Activated CD4-positive, alpha-beta T cell treated with anti-CD3 and anti-CD28 coated beads for 36 hours (primary cell): ENCODE measurements at regions of chr12 and their contacts with region 1.

Region 1: DNA sequence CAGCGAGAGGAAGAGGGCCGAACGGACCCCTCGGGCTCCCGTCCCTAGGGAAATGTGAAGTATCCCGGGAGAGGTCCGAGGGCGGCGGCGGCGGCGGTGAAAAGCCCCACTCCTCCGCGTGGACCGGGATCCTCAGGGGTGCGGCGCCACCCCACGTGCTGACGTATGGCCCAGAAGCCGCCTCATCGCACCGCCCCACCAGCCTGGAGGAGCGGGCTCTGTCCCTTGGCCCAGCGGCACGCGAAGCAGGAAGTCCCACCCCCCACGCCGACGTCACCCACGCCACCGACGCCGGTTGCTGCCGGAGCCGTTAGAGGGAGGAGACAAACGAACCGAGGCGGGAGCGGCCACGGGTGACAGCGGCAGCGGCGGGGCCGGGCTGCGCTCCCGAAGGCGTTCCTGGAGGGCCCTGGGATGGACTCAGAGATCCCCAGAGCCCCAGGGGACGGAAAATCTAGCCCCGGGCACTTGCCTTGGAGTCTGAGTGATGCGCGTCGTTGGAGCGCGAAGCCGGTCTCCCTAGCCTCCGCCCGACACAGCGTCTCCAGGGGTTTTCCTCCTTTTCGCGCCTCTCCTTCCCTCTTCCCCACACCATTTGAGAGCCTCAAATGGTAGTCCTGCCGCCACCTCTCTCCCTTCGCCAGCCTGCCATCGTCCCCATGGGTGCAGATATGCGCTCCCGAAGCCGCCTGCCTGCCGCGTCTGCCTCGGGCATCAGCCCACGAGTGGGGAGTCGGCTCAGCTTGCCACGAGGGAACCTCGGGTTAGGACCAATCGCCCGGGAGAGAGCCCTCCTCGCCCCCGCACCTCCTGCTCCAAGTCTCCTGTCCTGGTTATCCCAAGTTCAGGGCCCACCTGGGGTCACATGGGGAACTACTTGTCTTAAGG is at the start of gene CEP83:
- DNase-seq: peak; percentile 98
- ATAC-seq: peak; percentile 99
- H3K4me3 Mint-ChIP-seq: peak within 1 kb of the TSS; percentile 96
- H3K27ac Mint-ChIP-seq: peak within 1 kb of the TSS; percentile 95
- H3K4me1 Mint-ChIP-seq: peaks cover 30% of the 10 kb centered on the region
- H3K27me3 Mint-ChIP-seq: peaks cover 10% of the 10 kb centered on the region
- total RNA-seq, gene CEP83: 21.9 to 22.6 TPM

Region 2: DNA sequence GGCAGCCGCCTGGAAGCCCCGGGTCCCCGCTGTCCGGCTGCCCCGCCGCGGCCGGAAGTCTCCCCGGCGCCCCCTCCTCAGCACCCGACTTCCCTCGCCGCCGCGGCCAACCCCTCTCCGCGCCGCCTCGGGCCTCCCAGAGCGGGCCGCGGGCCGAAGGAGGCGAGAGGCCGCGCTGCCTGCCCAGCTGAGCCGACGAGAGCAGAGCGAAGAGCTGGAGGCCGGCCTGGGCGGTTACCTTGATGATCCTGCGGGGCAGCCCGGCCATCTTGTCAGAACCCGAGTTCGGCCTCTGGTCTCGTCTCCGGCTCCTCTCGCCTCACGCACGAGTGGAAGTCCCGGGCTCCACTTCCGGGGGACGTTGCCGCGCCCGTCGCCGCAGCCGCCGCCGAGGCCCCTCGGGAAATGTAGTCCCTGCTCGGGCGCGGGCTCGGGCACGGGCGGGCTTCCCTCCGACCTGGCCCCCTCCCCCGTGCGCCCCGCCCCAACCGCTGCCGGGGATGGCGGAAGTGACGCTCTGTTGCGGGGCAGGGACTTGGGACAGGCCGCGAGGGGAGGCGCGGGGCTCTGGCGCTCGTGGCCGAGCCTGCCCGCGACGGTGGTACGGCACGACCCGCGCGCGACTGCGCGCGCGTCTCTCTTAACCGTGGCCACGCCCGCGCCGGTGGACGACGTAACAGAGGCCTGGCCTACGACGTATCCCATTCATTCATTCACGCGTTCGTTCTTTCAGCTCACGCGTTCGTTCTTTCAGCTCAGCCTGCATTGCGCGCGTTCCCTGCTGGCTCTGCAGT is 1018.2 kb before region 1 on chr12 and contains the start of gene UBE2N:
- CTCF ChIA-PET with region 1: no interaction called
- POLR2A ChIA-PET with region 1: no interaction called
- intact Hi-C with region 1: loop called in 1 of 2 experiments (anchors 10 kb)
- DNase-seq: peak; percentile 98
- ATAC-seq: peak; percentile 84
- H3K4me3 Mint-ChIP-seq: peak within 1 kb of the TSS; percentile 99
- H3K27ac Mint-ChIP-seq: peak within 1 kb of the TSS; percentile 99
- H3K4me1 Mint-ChIP-seq: peaks cover 48% of the 10 kb centered on the region
- H3K27me3 Mint-ChIP-seq: no peaks in the 10 kb centered on the region
- total RNA-seq, gene UBE2N: 186 to 279 TPM

Region 3: DNA sequence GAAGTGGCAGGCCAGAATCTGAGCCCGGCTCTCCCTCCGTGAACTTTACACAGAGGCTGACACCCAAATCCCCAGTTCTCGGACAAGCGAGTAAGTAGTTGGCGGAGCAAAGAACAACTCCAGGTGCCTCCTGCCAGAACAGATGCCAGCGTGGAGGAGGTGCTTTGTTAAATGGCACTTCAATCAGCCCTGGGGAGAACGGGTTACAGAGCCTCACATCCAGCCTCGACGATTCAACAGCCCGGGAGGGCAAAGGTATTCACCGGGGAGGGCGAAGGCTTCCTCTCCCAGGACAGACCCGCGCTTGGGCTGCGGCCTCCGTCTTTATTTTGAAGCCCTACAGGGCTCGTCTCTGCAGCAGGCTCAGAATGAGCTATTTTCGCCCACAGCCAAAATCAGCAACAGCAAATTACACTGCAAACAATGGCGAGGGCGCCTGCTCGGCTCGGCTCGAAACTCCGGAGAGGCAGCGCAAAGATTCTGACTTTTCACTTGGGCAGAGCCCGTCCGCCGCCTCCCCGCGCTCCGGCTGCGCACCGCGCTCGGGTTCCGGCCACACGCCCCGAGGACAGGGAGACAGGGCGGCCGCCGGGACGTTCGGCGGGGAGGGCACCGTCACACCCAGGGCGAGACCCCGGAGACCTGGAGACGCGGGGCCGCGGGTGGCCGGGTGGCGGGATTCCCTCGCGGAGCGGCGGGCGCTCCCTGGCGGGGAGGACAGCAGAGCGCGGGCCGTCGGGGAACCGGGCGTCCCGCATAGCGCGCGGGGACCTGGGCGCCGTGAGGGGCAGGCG is 189.6 kb after region 1 on chr12:
- CTCF ChIA-PET with region 1: no interaction called
- POLR2A ChIA-PET with region 1: no interaction called
- intact Hi-C with region 1: loop called in 1 of 2 experiments (anchors 10 kb)
- DNase-seq: peak; percentile 46
- ATAC-seq: peak; percentile 70
- H3K4me3 Mint-ChIP-seq: peak overlapping the region; percentile 60
- H3K27ac Mint-ChIP-seq: no peak overlapping the region
- H3K4me1 Mint-ChIP-seq: peaks cover 7% of the 10 kb centered on the region
- H3K27me3 Mint-ChIP-seq: peaks cover 60% of the 10 kb centered on the region